HEK293T (cell line): ENCODE measurements at regions of chr3 and their contacts with region 1.

Region 1: DNA sequence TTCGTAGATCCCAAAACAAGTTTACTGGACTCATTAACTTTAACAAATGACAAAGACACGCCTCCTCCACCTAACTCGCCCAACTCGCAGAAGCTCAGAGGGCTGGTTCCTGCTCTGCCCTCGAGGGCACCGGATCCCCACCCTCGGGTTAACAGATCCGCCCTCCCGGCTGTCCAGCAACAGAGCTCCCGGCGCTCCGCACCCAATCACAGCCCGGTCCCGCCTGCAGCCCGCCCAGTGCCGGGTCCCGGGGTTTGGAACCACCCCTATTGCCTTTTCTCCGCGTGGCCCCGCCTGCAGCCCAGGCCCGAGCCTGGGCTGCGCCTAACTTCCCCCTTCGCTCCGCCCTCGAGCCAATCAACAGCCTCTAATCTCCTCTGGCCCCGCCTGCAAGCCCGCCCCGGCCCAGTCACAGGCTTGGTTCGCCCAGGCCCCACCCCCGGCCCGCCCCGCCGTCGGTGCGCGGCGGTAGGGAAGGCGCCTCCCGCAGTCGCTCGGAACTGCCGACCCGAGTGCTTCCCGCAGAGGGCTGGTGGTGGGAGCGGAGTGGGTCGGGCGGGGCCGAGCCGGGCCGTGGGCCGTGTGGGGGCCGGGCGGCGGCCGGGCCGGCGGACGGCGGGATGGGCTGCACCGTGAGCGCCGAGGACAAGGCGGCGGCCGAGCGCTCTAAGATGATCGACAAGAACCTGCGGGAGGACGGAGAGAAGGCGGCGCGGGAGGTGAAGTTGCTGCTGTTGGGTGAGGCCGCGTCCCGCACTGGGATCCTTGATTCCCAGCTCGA is at the start of gene GNAI2:
- DNase-seq: peak; percentile 98

Region 2: GRCh38 chr3:50260027-50260941 is 24.4 kb after region 1 on chr3:
- CTCF ChIA-PET with region 1: interaction called, 5 read pairs
- POLR2A ChIA-PET with region 1: interaction called, 13 read pairs
- DNase-seq: peak; percentile 96

Region 3: GRCh38 chr3:50314342-50314741 is 78.4 kb after region 1 on chr3:
- CTCF ChIA-PET with region 1: no interaction called
- POLR2A ChIA-PET with region 1: no interaction called
- DNase-seq: no peak

Region 4: DNA sequence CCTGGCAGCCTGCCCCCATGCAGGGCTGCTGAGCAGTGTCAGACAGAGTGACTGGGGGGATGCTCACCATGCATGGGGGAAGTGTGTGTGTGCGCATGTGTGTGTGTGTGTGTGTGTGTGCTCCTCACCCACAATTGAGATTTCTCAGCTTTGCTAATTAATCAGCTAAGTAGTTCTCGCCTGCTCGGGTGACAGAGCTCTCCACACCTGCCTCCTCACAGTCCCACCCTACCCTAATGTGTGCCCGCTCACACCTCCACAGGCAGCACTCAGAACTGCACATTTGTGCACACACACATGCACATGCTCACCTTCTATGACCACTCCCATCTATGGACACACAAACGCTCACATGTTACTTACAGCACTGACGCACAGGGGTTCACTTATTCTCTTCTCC is 230.3 kb after region 1 on chr3:
- CTCF ChIA-PET with region 1: no interaction called
- POLR2A ChIA-PET with region 1: no interaction called
- DNase-seq: no peak